ENCODE measurements at regions of chr5 and their contacts with region 1.

Region 1: GRCh38 chr5:118076490-118076889 is 911.9 kb downstream of the DTWD2 start:
- DNase-seq: no peak
- ATAC-seq: no peak
- H3K4me3 ChIP-seq: no peak overlapping the region
- H3K4me3 Mint-ChIP-seq: no peak overlapping the region
- H3K27ac ChIP-seq: no peak overlapping the region
- H3K27ac Mint-ChIP-seq: no peak overlapping the region
- H3K4me1 ChIP-seq: no peaks in the 10 kb centered on the region
- H3K4me1 Mint-ChIP-seq: no peaks in the 10 kb centered on the region
- H3K27me3 ChIP-seq: no peaks in the 10 kb centered on the region
- H3K27me3 Mint-ChIP-seq: no peaks in the 10 kb centered on the region

Region 2: GRCh38 chr5:118196229-118196628 is 119.7 kb after region 1 on chr5:
- CTCF ChIA-PET with region 1: interaction called in 1 of 2 experiments, 10 read pairs
- POLR2A ChIA-PET with region 1: no interaction called
- DNase-seq: no peak
- ATAC-seq: no peak
- H3K4me3 ChIP-seq: no peak overlapping the region
- H3K4me3 Mint-ChIP-seq: no peak overlapping the region
- H3K27ac ChIP-seq: no peak overlapping the region
- H3K27ac Mint-ChIP-seq: no peak overlapping the region
- H3K4me1 ChIP-seq: no peaks in the 10 kb centered on the region
- H3K4me1 Mint-ChIP-seq: no peaks in the 10 kb centered on the region
- H3K27me3 ChIP-seq: no peaks in the 10 kb centered on the region
- H3K27me3 Mint-ChIP-seq: no peaks in the 10 kb centered on the region

Measured in T-cell (primary cell).